Activated CD4-positive, alpha-beta memory T cell treated with anti-CD3 and anti-CD28 coated beads, Interleukin-2, amount 10 ng/mL, durations not matched to agents 7 days and 5 days (primary cell): ENCODE measurements at regions of chr1 and their contacts with region 1.

Region 1: GRCh38 chr1:206912445-206913095 is 9.2 kb downstream of the FCMR start:
- DNase-seq: peak; percentile 69
- H3K4me3 Mint-ChIP-seq: no peak overlapping the region
- H3K27ac Mint-ChIP-seq: no peak overlapping the region
- H3K4me1 Mint-ChIP-seq: peaks cover 61% of the 10 kb centered on the region
- H3K27me3 Mint-ChIP-seq: no peaks in the 10 kb centered on the region

Region 2: GRCh38 chr1:206663832-206664652 is 248.5 kb before region 1 on chr1:
- CTCF ChIA-PET with region 1: interaction called, 10 read pairs
- POLR2A ChIA-PET with region 1: no interaction called
- DNase-seq: peak; percentile 69
- H3K4me3 Mint-ChIP-seq: no peak overlapping the region
- H3K27ac Mint-ChIP-seq: no peak overlapping the region
- H3K4me1 Mint-ChIP-seq: peaks cover 29% of the 10 kb centered on the region
- H3K27me3 Mint-ChIP-seq: peaks cover 27% of the 10 kb centered on the region

Region 3: GRCh38 chr1:206734499-206735142 is 177.9 kb before region 1 on chr1:
- CTCF ChIA-PET with region 1: interaction called, 158 read pairs
- POLR2A ChIA-PET with region 1: interaction called, 6 read pairs
- DNase-seq: peak; percentile 82
- H3K4me3 Mint-ChIP-seq: no peak overlapping the region
- H3K27ac Mint-ChIP-seq: peak overlapping the region; percentile 34
- H3K4me1 Mint-ChIP-seq: peaks cover 71% of the 10 kb centered on the region
- H3K27me3 Mint-ChIP-seq: no peaks in the 10 kb centered on the region

Region 4: GRCh38 chr1:206814716-206815341 is 97.7 kb before region 1 on chr1:
- CTCF ChIA-PET with region 1: interaction called, 114 read pairs
- POLR2A ChIA-PET with region 1: interaction called, 6 read pairs
- DNase-seq: no peak
- H3K4me3 Mint-ChIP-seq: no peak overlapping the region
- H3K27ac Mint-ChIP-seq: no peak overlapping the region
- H3K4me1 Mint-ChIP-seq: peaks cover 40% of the 10 kb centered on the region
- H3K27me3 Mint-ChIP-seq: no peaks in the 10 kb centered on the region

Region 5: DNA sequence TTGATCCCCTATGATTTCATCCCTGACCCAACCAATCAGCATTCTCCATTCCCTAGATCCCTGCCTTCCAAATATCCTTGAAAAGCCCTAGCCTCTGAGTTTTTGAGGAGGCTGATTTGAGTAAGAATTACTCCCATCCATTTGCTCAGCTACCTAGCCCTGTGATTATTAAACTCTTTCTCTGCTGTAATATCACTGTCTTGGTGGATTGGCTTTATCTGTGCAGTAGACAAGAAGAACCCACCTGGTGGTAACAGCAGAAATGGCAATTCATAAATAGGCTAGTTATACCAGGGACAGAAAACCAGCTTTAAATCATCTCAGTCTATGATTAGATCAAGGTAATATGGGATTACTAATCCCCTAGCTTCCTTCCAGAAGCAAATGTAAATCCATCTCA is 34.1 kb before region 1 on chr1:
- CTCF ChIA-PET with region 1: interaction called, 10 read pairs
- POLR2A ChIA-PET with region 1: no interaction called
- DNase-seq: no peak
- H3K4me3 Mint-ChIP-seq: no peak overlapping the region
- H3K27ac Mint-ChIP-seq: no peak overlapping the region
- H3K4me1 Mint-ChIP-seq: no peaks in the 10 kb centered on the region
- H3K27me3 Mint-ChIP-seq: peaks cover 6% of the 10 kb centered on the region

Region 6: GRCh38 chr1:206935491-206936067 is 23.0 kb after region 1 on chr1:
- CTCF ChIA-PET with region 1: interaction called, 32 read pairs
- POLR2A ChIA-PET with region 1: interaction called, 4 read pairs
- DNase-seq: peak; percentile 54
- H3K4me3 Mint-ChIP-seq: no peak overlapping the region
- H3K27ac Mint-ChIP-seq: no peak overlapping the region
- H3K4me1 Mint-ChIP-seq: peaks cover 8% of the 10 kb centered on the region
- H3K27me3 Mint-ChIP-seq: no peaks in the 10 kb centered on the region

Region 7: GRCh38 chr1:207017615-207018559 is 105.3 kb after region 1 on chr1:
- CTCF ChIA-PET with region 1: no interaction called
- POLR2A ChIA-PET with region 1: no interaction called
- DNase-seq: no peak
- H3K4me3 Mint-ChIP-seq: no peak overlapping the region
- H3K27ac Mint-ChIP-seq: no peak overlapping the region
- H3K4me1 Mint-ChIP-seq: peaks cover 6% of the 10 kb centered on the region
- H3K27me3 Mint-ChIP-seq: peaks cover 36% of the 10 kb centered on the region

Region 8: DNA sequence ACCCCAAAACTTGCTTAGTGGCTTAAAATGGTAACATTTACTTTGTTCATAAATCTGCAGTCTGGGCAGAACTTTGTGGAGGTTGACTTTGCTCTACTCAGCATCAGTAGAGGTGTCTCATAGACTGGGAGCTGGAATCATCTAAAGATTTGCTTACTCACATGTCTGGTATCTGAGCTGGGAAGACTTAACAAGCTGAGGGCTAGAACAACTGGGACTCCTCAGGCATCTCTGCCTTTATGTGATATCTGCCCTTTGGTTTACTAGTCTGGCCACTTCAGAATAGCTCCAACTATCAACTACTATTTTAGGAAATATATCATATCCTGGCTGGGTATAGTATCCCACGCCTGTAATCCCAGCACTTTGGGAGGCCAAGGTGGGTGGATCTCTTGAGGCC is 273.9 kb after region 1 on chr1:
- CTCF ChIA-PET with region 1: no interaction called
- POLR2A ChIA-PET with region 1: no interaction called
- DNase-seq: no peak
- H3K4me3 Mint-ChIP-seq: no peak overlapping the region
- H3K27ac Mint-ChIP-seq: no peak overlapping the region
- H3K4me1 Mint-ChIP-seq: peaks cover 5% of the 10 kb centered on the region
- H3K27me3 Mint-ChIP-seq: peaks cover 20% of the 10 kb centered on the region